Heart left ventricle (tissue), 16 donors: ENCODE measurements at regions of chr12 and their contacts with region 1.

Region 1: DNA sequence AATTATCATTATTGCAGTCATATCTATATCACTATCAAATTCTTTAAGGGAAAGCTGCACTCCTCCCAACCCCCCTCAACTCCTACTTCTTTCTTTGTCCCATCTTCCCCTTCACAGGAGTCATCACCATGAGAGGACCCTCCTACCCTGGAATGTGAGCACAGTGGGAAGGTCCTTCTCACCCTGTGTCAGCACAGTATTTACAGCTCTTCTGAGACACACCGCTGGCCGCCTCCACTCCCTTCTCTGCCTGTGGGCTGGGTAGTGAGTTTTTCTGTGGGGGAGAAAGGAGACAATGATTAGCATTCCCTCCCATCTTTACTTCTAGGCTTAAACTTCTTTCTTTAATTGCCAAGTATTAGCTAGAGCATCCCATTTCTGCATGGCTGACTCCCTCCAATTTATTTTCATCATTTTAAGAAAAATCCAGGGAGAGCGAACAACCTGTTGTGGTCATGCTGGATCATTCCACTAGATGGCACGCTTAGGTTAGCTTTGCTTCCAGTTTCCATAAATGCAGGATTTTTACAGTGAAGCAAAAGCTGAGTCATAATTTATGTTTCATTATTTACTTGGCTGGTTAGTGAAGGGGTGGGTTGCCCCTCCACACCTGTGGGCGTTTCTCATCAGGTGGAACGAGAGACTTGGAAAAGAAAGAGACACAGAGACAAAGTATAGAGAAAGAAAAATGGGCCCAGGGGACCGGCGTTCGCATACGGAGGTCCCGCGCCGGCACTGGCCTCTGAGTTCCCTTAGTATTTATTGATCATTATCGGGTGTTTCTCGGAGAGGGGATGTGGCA is 188.5 kb downstream of the ALX1 start:
- DNase-seq: peak in 1 of 5 donors; percentile 15
- ATAC-seq: peak in 3 of 4 donors; percentile 32 to 68 (median 61)
- H3K4me3 ChIP-seq: peak overlapping the region in 11 of 12 donors; percentile 17 to 58 (median 44)
- H3K27ac ChIP-seq: no peak overlapping the region
- H3K4me1 ChIP-seq: peaks cover 0 to 5% (median 0%) of the 10 kb centered on the region in 12 donors
- H3K27me3 ChIP-seq: peaks cover 0 to 26% (median 4%) of the 10 kb centered on the region in 9 donors
- CTCF ChIP-seq: peak; percentile 56 to 81 (median 74)
- POLR2A ChIP-seq: no peak

Region 2: DNA sequence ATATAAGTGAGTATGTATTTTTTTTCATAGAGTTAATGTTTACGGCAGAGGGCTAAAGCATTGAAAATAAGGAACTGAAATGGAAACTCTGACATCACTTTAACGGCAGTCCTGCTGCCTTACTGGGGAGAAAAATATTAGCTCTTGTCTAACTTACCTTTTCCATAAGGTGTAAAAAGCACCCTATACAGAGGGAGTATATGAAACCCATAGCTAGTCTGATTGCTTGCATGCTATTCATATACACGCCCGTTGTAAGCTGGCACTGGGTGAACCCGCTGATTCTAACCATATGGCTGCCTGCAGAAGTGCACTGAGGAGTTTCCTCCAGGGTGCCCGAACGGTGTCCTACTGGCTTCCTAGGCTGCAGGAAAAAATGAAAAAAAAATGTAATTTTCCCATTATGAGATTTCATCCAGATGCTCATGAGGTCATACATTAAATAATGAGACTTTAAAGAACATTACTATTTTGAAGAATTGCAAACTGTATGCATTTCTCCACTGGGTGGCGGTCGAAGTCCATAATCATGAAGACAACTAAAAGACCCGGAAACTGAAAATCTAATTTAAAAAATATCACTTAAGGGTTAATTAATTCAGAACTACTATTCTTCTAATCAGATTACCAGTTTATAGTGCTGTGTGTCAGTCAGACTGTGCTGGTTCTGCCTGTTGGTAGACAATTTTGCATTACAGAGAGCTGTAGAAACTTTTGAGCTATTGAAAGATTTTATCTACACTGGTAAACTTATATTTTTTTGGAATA is 43.8 kb before region 1 on chr12:
- intact Hi-C with region 1: no loop called
- DNase-seq: no peak
- ATAC-seq: no peak
- H3K4me3 ChIP-seq: no peak overlapping the region
- H3K27ac ChIP-seq: no peak overlapping the region
- H3K4me1 ChIP-seq: no peaks in the 10 kb centered on the region
- H3K27me3 ChIP-seq: peaks cover 0 to 26% (median 0%) of the 10 kb centered on the region in 9 donors
- CTCF ChIP-seq: peak in 6 of 12 donors; percentile 13 to 42 (median 27)
- POLR2A ChIP-seq: no peak

Region 3: GRCh38 chr12:85516667-85517325 is 48.2 kb after region 1 on chr12:
- intact Hi-C with region 1: no loop called
- DNase-seq: no peak
- ATAC-seq: no peak
- H3K4me3 ChIP-seq: no peak overlapping the region
- H3K27ac ChIP-seq: no peak overlapping the region
- H3K4me1 ChIP-seq: no peaks in the 10 kb centered on the region
- H3K27me3 ChIP-seq: peaks cover 0 to 3% (median 0%) of the 10 kb centered on the region in 9 donors
- CTCF ChIP-seq: no peak
- POLR2A ChIP-seq: no peak

Region 4: GRCh38 chr12:85872497-85873091 is 404.0 kb after region 1 on chr12:
- intact Hi-C with region 1: loop called in 9 of 10 experiments (anchors 2 to 5 kb)
- DNase-seq: no peak
- ATAC-seq: no peak
- H3K4me3 ChIP-seq: no peak overlapping the region
- H3K27ac ChIP-seq: no peak overlapping the region
- H3K4me1 ChIP-seq: no peaks in the 10 kb centered on the region
- H3K27me3 ChIP-seq: peaks cover 0 to 6% (median 0%) of the 10 kb centered on the region in 9 donors
- CTCF ChIP-seq: peak; percentile 62 to 90 (median 74)
- POLR2A ChIP-seq: no peak

Region 5: DNA sequence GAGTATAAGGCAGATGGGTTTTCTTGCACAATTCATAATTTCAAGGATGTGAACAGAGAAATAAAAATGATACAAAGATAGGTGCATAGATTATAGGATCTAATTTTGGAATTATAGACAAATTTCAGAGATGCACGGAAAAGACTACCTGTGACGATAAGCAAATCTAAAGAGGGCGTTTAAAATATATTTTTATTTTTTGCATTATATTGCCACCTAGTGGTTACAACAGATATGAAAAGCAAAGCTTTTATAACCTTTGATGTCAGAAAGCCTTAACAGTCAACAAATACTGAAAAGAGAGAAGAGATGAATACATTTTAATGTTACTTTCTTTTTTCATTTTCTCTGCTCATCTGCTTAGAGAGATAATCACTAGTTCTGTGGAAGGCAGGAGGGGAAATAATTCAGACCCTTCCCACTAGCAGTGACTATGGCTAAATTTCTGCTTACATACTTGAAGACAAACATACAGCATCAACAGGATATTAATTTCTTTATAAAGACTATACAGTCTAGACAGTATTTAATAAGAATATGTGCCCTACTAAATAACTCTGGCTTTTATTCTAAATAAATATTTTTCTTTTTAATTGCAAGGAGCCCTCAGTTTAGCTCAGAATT is 451.9 kb after region 1 on chr12:
- intact Hi-C with region 1: loop called (anchors 2 to 5 kb)
- DNase-seq: no peak
- ATAC-seq: no peak
- H3K4me3 ChIP-seq: no peak overlapping the region
- H3K27ac ChIP-seq: no peak overlapping the region
- H3K4me1 ChIP-seq: no peaks in the 10 kb centered on the region
- H3K27me3 ChIP-seq: no peaks in the 10 kb centered on the region
- CTCF ChIP-seq: peak; percentile 57 to 77 (median 72)
- POLR2A ChIP-seq: no peak